CD4-positive, alpha-beta memory T cell (primary cell): ENCODE measurements at regions of chr1 and their contacts with region 1.

Region 1: DNA sequence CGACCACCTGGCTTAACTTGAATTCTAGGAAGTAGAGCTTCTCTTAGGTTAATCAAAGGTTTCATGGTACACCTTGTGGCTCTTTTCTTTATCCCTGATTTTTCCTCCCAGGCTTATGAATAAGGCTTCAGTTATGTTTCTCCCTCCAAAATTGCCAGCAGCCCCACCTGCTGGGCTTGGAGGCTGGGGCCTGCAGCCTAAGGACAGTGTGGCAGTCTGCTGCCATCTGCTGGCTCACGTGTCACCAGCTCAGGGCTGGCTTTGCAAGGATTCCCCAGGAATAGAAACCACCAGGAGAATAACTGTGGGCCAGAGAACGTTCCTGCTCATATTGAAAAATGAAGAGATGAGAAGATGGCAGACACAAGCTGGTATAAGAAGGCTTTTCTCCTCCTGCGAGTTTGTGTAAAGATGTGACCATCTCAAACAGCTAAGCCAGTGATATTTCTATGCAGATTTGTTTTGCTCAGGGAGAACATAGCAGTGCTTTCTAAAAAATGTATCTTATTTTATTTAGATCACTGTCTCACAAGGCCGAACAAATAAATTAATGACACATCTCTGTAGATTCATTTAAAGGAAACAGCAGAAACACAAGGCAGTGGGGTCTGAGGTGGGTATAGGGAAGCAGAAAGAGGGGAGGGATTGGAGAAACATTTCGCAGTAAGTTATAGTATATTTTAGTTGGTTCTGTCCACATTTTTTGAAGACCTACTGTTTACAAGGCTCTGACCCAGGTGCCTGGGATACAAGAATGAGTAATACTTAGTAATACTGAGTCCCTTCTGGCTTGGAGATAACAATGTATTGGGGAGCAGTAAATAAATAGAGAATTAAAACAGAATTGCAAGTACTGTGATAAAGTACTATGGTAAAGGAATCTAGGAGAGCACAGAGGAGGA is 291.1 kb upstream of the SGIP1 start:
- DNase-seq: peak; percentile 63 to 72 (median 65)
- H3K4me3 ChIP-seq: no peak overlapping the region
- H3K4me3 Mint-ChIP-seq: no peak overlapping the region
- H3K27ac ChIP-seq: no peak overlapping the region
- H3K27ac Mint-ChIP-seq: no peak overlapping the region
- H3K4me1 ChIP-seq: peaks cover 50% of the 10 kb centered on the region
- H3K4me1 Mint-ChIP-seq: peaks cover 0 to 28% (median 22%) of the 10 kb centered on the region in 4 donors
- H3K27me3 ChIP-seq: no peaks in the 10 kb centered on the region
- H3K27me3 Mint-ChIP-seq: peaks cover 6 to 8% of the 10 kb centered on the region in 2 donors

Region 2: GRCh38 chr1:65254319-65255034 is 988.4 kb before region 1 on chr1:
- CTCF ChIA-PET with region 1: no interaction called
- POLR2A ChIA-PET with region 1: no interaction called
- intact Hi-C with region 1: loop called (anchors 10 kb)
- DNase-seq: peak; percentile 81 to 85 (median 83)
- H3K4me3 ChIP-seq: peak overlapping the region; percentile 45 to 68
- H3K4me3 Mint-ChIP-seq: peak overlapping the region; percentile 85 to 98 (median 94)
- H3K27ac ChIP-seq: no peak overlapping the region
- H3K27ac Mint-ChIP-seq: peak overlapping the region in 5 of 7 donors; percentile 72 to 94 (median 88)
- H3K4me1 ChIP-seq: peaks cover 20% of the 10 kb centered on the region
- H3K4me1 Mint-ChIP-seq: peaks cover 8 to 20% (median 16%) of the 10 kb centered on the region in 4 donors
- H3K27me3 ChIP-seq: no peaks in the 10 kb centered on the region
- H3K27me3 Mint-ChIP-seq: peaks cover 0 to 4% of the 10 kb centered on the region in 2 donors

Region 3: GRCh38 chr1:65958561-65959350 is 284.1 kb before region 1 on chr1:
- CTCF ChIA-PET with region 1: interaction called, 191 read pairs
- POLR2A ChIA-PET with region 1: interaction called, 3 read pairs
- intact Hi-C with region 1: loop called (anchors 1 kb)
- DNase-seq: peak in 4 of 5 donors; percentile 55 to 73 (median 63)
- H3K4me3 ChIP-seq: no peak overlapping the region
- H3K4me3 Mint-ChIP-seq: no peak overlapping the region
- H3K27ac ChIP-seq: no peak overlapping the region
- H3K27ac Mint-ChIP-seq: no peak overlapping the region
- H3K4me1 ChIP-seq: no peaks in the 10 kb centered on the region
- H3K4me1 Mint-ChIP-seq: no peaks in the 10 kb centered on the region
- H3K27me3 ChIP-seq: no peaks in the 10 kb centered on the region
- H3K27me3 Mint-ChIP-seq: peaks cover 2 to 5% of the 10 kb centered on the region in 2 donors

Region 4: DNA sequence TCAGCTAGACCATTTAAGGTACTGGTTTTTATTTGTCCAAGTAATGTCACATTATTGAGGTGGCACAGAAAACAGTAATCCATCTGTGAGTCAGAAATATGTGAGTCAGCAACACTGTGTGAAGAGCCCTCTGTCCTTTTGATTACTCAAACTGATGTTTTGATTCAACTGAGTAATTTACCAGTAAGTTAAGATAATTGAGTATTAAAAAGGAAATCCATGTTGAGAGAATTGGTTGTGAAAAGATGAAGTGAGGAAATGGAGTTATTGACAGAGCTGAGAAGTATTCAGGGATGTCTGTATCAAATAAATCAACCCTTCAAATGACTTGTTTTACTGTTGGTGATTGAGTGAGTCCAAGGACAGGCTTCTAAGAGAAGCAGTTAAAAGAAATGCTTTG is 11.7 kb before region 1 on chr1:
- CTCF ChIA-PET with region 1: interaction called, 34 read pairs
- POLR2A ChIA-PET with region 1: no interaction called
- intact Hi-C with region 1: no loop called
- DNase-seq: no peak
- H3K4me3 ChIP-seq: no peak overlapping the region
- H3K4me3 Mint-ChIP-seq: no peak overlapping the region
- H3K27ac ChIP-seq: no peak overlapping the region
- H3K27ac Mint-ChIP-seq: no peak overlapping the region
- H3K4me1 ChIP-seq: no peaks in the 10 kb centered on the region
- H3K4me1 Mint-ChIP-seq: no peaks in the 10 kb centered on the region
- H3K27me3 ChIP-seq: no peaks in the 10 kb centered on the region
- H3K27me3 Mint-ChIP-seq: peaks cover 0 to 9% of the 10 kb centered on the region in 2 donors

Region 5: DNA sequence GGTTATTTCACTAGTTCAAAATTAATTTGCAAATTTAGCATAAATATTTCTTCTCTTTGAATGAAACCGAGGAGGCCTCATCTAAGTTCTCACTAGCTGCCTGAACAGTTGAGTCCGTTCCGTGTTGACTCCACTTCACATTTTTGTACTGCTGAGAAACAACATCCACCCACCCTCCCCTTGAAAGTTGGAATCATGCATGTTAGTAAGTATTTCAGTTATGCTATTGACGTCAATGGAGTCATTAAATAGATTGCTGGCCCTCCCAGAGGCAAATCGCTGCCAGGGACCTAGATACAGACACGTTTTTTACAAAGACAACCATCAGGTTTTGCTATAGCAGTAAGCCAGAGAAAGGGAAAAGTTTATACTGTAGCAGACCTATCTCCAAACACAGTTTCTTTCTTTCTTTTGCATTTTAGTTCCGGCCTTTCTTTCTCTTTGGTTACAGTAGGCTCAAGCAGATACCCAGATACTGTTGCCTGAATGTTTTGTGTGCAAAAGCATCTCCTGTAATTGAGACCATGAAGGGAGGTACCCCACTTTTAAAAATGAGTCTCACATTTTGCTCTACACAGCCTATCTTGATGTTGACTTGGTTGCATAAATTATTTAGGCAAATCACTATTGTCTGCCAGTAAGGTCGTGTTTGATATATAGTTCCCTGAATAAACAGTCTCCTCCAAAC is 28.5 kb after region 1 on chr1:
- CTCF ChIA-PET with region 1: interaction called, 22 read pairs
- POLR2A ChIA-PET with region 1: interaction called, 18 read pairs
- intact Hi-C with region 1: no loop called
- DNase-seq: peak; percentile 43 to 69 (median 54)
- H3K4me3 ChIP-seq: no peak overlapping the region
- H3K4me3 Mint-ChIP-seq: peak overlapping the region; percentile 2 to 74 (median 48)
- H3K27ac ChIP-seq: peak overlapping the region; percentile 18
- H3K27ac Mint-ChIP-seq: peak overlapping the region; percentile 33 to 93 (median 89)
- H3K4me1 ChIP-seq: peaks cover 55% of the 10 kb centered on the region
- H3K4me1 Mint-ChIP-seq: peaks cover 43 to 54% (median 51%) of the 10 kb centered on the region in 4 donors
- H3K27me3 ChIP-seq: no peaks in the 10 kb centered on the region
- H3K27me3 Mint-ChIP-seq: no peaks in the 10 kb centered on the region

Region 6: DNA sequence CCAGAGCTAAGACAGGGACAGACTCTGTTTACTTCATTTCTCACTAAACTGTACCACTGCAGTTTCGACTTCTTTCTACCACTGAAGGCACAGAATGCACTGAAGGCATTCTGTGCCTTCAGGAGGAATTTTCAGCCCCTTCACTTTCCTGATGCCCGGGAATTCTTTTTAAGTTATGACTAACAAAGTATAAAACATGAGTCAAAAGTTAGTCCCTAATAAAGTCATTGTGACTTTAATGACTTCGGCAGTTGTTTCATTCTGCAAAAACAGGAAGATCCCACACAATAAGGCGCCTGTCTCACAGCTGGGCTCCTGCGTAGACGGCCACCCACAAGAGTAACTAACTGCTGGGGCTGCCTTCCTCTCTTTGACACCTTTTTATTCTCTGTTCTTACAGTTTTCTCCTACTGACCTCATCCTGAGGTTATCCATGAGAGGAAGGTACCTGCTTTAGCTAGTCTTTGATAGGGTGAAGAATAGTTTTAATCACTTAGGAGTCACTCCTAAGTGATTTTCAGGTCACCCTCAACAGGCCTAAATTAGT is 107.2 kb after region 1 on chr1:
- CTCF ChIA-PET with region 1: interaction called, 12 read pairs
- POLR2A ChIA-PET with region 1: interaction called, 4 read pairs
- intact Hi-C with region 1: no loop called
- DNase-seq: peak; percentile 73 to 82 (median 77)
- H3K4me3 ChIP-seq: peak overlapping the region in 1 of 2 donors; percentile 11
- H3K4me3 Mint-ChIP-seq: peak overlapping the region; percentile 73 to 83 (median 80)
- H3K27ac ChIP-seq: peak overlapping the region; percentile 70
- H3K27ac Mint-ChIP-seq: peak overlapping the region; percentile 89 to 100 (median 97)
- H3K4me1 ChIP-seq: peaks cover 98% of the 10 kb centered on the region
- H3K4me1 Mint-ChIP-seq: peaks cover 82 to 97% (median 89%) of the 10 kb centered on the region in 4 donors
- H3K27me3 ChIP-seq: no peaks in the 10 kb centered on the region
- H3K27me3 Mint-ChIP-seq: no peaks in the 10 kb centered on the region

Region 7: DNA sequence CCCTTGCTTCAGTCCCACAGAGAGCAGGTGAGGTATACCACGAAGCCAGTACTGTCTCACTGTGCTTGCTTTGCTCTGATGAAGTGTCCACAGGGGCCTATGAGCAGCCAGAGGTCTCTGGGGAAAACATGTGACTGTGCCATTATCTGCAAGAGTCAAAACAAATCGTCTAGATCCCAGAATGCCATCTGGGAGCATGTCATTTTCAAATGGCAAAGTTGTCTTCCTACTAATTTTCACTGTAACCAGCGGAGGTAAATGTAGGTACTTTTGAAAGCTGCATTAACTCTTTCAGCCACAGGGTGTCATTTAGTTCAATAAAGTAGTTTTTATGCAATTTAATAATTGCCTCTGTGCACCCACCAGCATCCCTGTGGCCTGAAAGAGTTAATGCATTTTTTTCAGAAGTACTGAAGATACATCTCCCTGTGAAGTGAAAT is 117.4 kb after region 1 on chr1:
- CTCF ChIA-PET with region 1: no interaction called
- POLR2A ChIA-PET with region 1: no interaction called
- intact Hi-C with region 1: no loop called
- DNase-seq: no peak
- H3K4me3 ChIP-seq: no peak overlapping the region
- H3K4me3 Mint-ChIP-seq: peak overlapping the region in 3 of 8 donors; percentile 3 to 64 (median 36)
- H3K27ac ChIP-seq: no peak overlapping the region
- H3K27ac Mint-ChIP-seq: peak overlapping the region in 5 of 7 donors; percentile 4 to 77 (median 29)
- H3K4me1 ChIP-seq: peaks cover 78% of the 10 kb centered on the region
- H3K4me1 Mint-ChIP-seq: peaks cover 57 to 90% (median 74%) of the 10 kb centered on the region in 4 donors
- H3K27me3 ChIP-seq: no peaks in the 10 kb centered on the region
- H3K27me3 Mint-ChIP-seq: no peaks in the 10 kb centered on the region

Region 8: DNA sequence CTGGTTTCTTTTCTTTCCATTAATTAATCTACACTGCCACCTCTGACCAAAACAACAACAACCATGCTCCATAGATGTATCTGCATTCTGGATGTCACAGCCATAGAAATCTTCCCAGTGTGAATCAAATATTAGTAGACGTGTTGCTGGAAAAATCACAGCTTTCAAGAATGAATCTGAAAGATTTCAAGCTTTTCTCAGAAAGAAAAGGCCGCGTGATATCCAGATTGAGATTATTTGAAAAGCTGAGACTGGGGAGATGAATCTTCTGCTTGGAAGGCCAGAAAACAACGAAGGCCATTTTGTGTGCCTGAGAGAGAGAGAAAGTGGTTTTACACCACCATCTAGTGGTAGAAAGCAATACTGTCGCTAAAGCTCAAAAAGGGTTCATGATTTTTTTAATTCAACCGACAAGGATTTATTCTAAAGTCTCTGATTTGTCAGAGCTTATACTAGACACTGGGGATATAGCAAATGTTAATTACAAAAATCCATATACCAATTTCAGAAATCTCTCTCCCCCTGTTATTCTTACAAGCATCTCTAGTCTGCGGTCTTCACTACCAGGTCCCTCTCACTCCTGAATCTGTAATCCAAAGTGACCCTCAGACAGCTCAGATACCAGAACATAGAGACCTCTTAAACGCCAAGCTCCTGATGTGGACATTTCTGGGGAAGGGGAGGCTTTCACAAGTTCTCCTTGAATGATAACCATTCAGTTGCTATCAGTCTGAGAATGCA is 203.5 kb after region 1 on chr1:
- CTCF ChIA-PET with region 1: interaction called, 874 read pairs
- POLR2A ChIA-PET with region 1: interaction called, 59 read pairs
- intact Hi-C with region 1: no loop called
- DNase-seq: peak; percentile 57 to 76 (median 75)
- H3K4me3 ChIP-seq: peak overlapping the region in 1 of 2 donors; percentile 21
- H3K4me3 Mint-ChIP-seq: peak overlapping the region in 7 of 8 donors; percentile 36 to 84 (median 68)
- H3K27ac ChIP-seq: peak overlapping the region; percentile 48
- H3K27ac Mint-ChIP-seq: peak overlapping the region; percentile 73 to 95 (median 90)
- H3K4me1 ChIP-seq: peaks cover 23% of the 10 kb centered on the region
- H3K4me1 Mint-ChIP-seq: peaks cover 19 to 25% (median 21%) of the 10 kb centered on the region in 4 donors
- H3K27me3 ChIP-seq: no peaks in the 10 kb centered on the region
- H3K27me3 Mint-ChIP-seq: peaks cover 1 to 4% of the 10 kb centered on the region in 2 donors